BJ (cell line): ENCODE measurements at regions of chr1 and their contacts with region 1.

Region 1: DNA sequence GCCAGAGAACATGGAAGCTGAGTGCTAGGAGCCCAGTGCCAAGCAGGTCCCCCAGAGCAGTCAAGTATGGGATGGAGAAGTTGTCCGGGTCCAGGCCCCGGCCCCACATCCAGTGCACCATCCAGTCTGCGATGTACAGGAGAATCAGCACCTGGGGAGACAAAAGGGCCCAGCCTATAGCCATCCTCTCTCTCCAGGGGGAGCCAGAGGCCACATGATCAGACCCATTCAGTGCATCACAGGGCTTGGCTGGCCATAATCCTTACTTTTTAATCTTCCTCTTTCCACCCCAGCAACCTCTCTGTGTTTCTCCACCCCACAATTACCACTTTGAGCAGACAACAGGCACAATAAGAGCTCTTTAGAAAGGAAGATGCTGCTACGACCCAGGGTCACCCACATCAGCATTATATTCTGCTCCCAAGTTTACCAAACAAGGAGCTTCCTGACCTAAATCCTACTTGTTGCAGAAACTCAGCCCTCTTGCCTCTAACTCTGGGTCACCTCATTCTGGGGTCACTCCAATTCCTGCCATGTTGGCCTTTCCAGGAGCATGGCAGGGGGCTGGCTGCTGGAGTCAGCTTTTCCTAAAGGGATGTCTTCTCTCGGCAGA is 16.4 kb upstream of the RAB29 start:
- DNase-seq: no peak
- H3K4me3 ChIP-seq: no peak overlapping the region
- H3K27me3 ChIP-seq: no peaks in the 10 kb centered on the region
- CTCF ChIP-seq: peak; percentile 87

Region 2: DNA sequence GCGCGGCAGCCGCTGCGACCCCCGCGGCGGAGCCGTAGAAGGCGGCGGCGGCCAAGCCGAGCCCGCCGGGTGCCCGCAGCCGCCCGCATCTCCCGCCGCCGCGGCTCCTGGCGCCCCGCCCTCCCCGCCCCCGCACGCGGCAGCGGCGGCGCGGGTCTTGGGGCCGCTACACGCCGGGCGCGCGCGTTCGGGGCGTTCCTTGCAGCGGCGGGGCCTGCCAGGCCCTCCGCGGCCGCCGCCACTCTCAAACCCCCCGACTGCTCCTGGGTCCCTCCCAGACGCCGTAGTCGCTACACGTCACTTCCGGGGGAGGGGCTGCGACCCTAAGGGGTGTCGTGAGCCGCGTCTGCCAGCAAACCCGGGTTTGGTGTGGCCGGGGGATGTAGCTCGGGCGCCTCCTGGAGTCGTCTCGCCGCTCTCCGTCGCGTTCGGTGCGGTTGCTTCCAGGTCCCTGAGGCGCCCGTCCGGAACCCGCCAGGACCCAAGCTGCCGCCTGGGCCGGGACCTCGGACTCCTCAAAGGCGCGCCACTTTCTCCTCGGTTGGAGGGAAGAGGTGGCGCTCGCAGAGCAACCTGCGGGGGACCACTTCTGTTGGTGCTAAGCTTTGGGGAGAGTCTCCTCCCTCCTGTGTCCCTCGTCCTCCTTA is 159.8 kb before region 1 on chr1 and contains the start of gene ELK4:
- CTCF ChIA-PET with region 1: no interaction called
- POLR2A ChIA-PET with region 1: no interaction called
- DNase-seq: peak; percentile 80
- H3K4me3 ChIP-seq: peak within 1 kb of the TSS; percentile 63
- H3K27me3 ChIP-seq: no peaks in the 10 kb centered on the region
- CTCF ChIP-seq: peak; percentile 78
- polyA plus RNA-seq, gene ELK4: 3.4 and 5.7 TPM in 2 replicates

Region 3: DNA sequence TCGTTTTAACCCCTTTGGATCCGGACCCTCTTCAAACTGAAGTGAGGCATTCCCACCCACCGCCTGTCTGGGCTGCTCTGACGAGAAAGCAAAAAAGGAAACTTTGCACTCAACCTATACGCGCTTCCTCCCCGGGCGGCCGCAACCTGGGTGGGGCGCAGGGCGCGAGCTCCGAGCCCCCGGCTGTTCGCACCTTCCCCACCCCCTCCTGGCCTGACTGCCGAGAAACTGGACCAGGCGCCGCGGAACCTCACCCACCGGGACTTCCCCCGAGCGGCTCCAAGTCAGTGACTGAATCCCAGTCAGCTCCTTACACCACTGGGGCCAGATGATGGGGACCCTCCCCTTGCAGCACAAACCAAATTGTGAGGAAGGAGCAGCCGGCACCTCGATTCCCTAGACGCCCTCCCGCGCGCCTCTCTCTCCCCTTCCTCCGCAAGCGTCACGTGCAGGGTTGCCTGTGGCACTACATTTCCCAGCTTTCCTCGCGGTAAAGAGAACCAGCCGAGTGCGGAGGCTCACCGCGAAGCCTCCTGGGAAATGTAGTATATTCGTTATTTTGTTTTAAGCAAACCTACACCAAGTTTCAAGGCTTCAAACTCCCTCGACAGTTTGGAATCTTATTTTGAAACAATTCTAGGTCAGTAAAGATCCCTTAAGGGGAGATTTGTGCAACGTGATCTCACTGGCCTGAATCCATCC is 16.5 kb before region 1 on chr1 and contains the start of gene RAB29:
- CTCF ChIA-PET with region 1: interaction called, 26 read pairs
- POLR2A ChIA-PET with region 1: no interaction called
- DNase-seq: peak; percentile 44
- H3K4me3 ChIP-seq: peak within 1 kb of the TSS; percentile 78
- H3K27me3 ChIP-seq: no peaks in the 10 kb centered on the region
- CTCF ChIP-seq: no peak
- polyA plus RNA-seq, gene RAB29: 12.1 and 13.4 TPM in 2 replicates

Region 4: DNA sequence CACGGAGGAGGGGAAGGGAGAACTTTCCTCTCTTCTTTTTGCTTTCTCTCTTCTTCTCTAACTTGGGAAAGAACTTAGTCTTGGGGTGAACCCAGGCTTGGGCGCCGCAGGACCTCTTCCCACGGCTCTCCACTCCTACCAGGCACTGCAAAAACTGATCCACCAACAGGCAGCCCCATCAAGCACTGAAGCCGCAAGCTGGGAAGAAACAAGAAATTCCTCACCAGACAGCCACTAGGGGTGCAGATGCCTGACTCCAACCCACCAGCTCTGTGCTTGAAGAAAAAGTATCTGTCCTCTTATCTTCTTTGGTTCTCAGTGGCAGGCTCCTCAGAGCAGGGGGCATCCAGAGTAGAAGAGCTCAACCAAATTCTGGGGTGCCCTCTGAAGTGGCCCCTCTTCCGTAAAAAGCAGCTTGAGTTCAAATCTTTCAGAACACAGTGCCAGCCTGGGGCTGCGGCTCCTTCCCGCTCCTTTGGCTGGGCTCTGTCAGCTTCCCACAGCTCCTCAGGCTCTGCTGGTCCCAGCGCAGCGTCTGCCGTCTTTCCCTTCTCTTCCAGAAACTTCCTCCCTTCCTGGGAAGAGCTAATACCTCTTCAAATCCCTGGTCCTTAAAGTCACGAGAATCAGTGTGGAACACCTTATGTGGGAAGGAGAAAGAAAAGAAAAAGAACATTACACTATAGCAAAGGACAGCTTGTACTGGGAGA is 18.9 kb after region 1 on chr1:
- CTCF ChIA-PET with region 1: interaction called, 29 read pairs
- POLR2A ChIA-PET with region 1: no interaction called
- DNase-seq: no peak
- H3K4me3 ChIP-seq: no peak overlapping the region
- H3K27me3 ChIP-seq: no peaks in the 10 kb centered on the region
- CTCF ChIP-seq: no peak

Region 5: DNA sequence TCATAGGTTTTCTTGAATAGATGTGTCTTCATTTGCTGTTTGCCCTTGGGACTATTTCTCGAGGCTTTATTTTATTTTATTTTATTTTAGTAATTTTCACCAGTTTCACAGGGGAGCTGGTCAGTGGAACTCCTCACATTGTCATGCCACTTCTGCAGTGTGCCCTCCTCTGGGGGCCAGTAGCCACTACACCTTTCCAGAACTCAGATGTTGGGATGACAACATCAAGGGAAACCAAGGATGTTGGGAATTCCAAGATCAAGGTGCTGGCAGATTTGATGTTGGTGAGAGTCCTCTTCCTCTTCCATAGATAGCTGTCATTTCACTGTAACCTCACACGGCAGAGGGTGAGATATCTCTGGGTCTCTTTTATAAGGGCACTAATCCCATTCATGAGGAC is 116.1 kb after region 1 on chr1:
- CTCF ChIA-PET with region 1: interaction called, 61 read pairs
- POLR2A ChIA-PET with region 1: no interaction called
- DNase-seq: no peak
- H3K4me3 ChIP-seq: no peak overlapping the region
- H3K27me3 ChIP-seq: no peaks in the 10 kb centered on the region
- CTCF ChIP-seq: peak; percentile 76

Region 6: DNA sequence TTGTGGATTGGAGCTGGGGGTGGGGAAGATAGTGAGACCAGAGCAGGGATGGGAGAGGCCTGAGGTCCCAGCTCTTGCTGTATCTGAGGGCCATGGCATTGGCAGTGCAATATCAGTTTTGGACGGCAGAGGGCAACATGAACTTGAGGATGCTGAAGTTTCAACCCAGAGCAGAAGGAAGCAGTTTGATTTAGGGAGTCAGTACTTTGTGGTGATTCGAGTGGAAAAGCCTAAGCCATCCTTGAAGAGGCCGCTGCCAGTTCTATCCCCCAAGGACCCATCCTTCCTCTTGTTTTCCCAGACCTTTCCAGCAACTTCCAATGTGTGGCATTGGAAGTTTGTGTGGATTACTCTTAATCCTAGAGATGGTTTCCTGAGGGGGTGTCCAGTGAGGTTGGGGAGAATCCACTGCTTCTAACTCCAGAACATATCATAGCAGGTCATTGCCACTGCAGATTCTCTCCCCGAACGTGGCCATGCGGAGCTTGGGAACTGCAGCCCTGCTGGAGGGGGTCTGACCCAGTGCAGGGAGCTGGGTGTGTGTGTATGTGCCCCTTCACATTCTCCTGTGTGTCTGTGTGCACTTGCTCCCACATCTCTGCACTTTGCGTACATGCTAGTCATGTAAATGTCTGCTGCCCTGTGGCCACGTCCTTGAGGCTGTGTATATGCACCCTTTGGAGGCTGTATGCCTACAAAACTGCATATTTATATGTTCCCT is 127.5 kb after region 1 on chr1:
- CTCF ChIA-PET with region 1: interaction called, 31 read pairs
- POLR2A ChIA-PET with region 1: no interaction called
- DNase-seq: no peak
- H3K4me3 ChIP-seq: no peak overlapping the region
- H3K27me3 ChIP-seq: no peaks in the 10 kb centered on the region; the same call in 1 of the 2 replicates
- CTCF ChIP-seq: peak; percentile 88

Region 7: DNA sequence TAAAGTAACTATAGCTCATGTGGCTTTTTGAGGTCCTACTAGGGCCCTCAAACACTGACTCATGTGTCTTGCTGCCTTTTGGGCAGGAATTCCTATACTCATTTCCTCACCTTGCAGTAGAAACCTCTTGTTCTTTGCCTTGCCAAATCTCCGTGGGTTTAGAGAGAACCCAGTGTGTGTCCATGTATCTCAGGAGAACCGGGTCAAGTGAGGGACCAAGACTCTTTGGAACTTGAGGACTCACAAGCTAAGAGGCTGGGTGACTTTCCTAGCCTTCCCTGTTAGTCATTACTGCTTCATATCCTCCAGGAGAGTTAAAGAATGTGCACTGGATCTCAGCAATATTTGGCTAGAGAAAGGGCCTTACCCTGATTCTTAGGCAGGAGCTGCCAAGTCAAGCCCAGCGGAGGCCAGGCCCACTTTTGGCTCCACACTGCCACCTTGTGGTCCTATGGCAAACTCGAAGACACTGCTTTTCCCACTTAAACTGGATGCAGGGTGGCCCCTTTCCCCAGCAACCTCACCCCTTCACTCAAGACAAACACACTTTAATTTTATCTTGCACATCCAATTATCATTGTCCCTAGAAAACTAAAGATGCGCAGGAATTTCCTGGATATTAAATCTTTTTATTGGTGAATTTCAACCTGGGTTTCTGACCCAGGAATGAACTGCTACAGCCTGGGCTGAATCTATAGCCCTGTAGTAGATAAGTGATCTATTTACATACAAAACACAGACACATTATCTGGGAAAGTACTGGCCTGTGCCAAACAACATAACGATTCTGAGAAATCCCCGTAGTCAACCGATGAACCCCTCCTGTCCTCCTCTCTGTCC is 314.9 kb after region 1 on chr1:
- CTCF ChIA-PET with region 1: interaction called, 10 read pairs
- POLR2A ChIA-PET with region 1: no interaction called
- DNase-seq: peak; percentile 49
- H3K4me3 ChIP-seq: no peak overlapping the region
- H3K27me3 ChIP-seq: peaks cover 12% of the 10 kb centered on the region
- CTCF ChIP-seq: peak; percentile 88